ENCODE measurements at regions of chr4 and their contacts with region 1.

Region 1: GRCh38 chr4:112327965-112328733 is 31.0 kb downstream of the ALPK1 start:
- DNase-seq: no peak
- ATAC-seq: peak in 2 of 8 donors; percentile 41 to 46
- H3K4me3 ChIP-seq: no peak overlapping the region
- H3K27ac ChIP-seq: no peak overlapping the region
- H3K4me1 ChIP-seq: peaks cover 0 to 5% (median 0%) of the 10 kb centered on the region in 9 donors
- H3K27me3 ChIP-seq: no peaks in the 10 kb centered on the region
- CTCF ChIP-seq: peak in 8 of 9 donors; percentile 43 to 65 (median 54)

Region 2: DNA sequence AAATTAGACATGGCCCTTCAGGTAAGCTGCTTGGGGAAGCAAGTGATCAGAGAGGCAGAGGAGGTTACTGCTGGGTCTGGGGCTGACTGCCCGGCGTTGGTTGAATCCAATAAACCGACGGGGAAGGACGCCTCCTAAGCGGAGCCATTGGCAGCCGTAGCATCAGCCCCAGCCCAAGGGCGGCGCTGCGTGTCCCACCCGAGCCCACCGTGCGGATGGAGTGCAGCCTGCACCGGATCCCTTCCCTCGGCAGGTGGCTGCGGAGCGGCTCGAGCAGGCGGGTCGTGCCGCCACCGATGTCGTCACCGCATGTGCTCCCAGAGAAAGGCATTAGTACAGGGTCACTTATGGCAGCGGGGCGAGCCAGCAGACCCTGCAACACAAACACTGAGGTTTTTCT is 51.2 kb after region 1 on chr4:
- intact Hi-C with region 1: no loop called
- DNase-seq: peak in 1 of 2 donors; percentile 12
- ATAC-seq: peak in 1 of 8 donors; percentile 16
- H3K4me3 ChIP-seq: peak overlapping the region in 1 of 10 donors; percentile 8
- H3K27ac ChIP-seq: no peak overlapping the region
- H3K4me1 ChIP-seq: peaks cover 0 to 5% (median 0%) of the 10 kb centered on the region in 9 donors
- H3K27me3 ChIP-seq: peaks cover 0 to 3% (median 0%) of the 10 kb centered on the region in 7 donors
- CTCF ChIP-seq: no peak

Region 3: DNA sequence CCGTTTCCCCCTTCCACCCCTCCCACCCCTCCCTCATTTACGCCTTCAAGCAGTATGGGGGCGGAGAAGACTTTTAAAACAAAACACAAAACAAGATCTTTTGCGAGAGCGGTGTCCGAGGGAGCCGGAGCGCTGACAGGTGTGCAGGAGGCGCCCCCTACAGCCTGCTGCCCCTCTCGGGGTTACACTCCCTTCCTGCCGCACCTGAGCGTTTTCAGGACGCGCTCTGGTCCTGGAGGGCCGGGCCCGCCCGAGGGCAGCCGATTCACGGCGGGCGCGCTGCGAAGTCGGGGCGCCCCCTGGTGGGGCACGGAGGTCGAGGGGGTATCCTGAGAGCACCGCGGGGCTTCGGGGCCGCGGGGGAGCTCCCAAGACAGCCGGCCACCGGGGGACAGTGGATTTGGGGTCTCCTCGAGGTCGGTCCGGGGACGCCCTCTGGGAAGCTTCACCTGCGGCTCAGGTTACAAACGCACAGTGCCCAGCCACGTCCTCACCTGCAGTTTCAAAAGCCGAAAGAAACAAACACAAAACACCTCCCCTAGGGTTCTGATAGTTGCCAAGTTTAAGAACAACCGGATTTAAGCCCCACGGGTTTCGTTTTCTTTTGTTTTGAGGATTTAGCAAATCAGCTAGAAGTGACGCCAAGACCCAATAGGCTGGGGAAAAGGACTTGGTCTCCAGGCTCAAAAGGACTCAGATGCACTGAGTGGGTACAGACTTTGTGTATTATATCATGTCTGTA is 195.8 kb after region 1 on chr4:
- intact Hi-C with region 1: loop called (anchors 2 to 10 kb)
- DNase-seq: peak in 1 of 2 donors; percentile 65
- ATAC-seq: peak; percentile 58 to 83 (median 74)
- H3K4me3 ChIP-seq: peak overlapping the region in 7 of 10 donors; percentile 30 to 51 (median 39)
- H3K27ac ChIP-seq: no peak overlapping the region
- H3K4me1 ChIP-seq: peaks cover 0 to 30% (median 17%) of the 10 kb centered on the region in 9 donors
- H3K27me3 ChIP-seq: peaks cover 31 to 94% (median 84%) of the 10 kb centered on the region in 7 donors
- CTCF ChIP-seq: peak; percentile 45 to 84 (median 69)

Region 4: DNA sequence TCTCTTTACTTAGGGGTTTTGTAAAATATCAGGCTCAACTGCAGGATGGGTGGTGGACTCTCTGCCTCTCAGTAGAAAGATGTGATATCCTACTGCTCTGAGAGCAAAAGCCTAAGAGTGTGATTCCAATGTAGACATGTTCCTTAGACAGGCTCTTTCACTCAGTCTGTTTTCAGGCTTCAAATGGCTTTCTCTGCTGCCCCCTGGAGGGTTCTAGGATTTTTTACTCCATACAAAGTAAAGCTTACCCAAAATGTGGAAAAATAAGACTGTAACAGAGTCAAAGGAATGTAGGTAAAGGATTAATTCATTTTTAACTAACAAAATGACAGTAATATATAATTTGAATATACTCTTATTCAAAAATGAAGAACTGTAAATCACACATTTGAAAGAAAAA is 276.4 kb after region 1 on chr4:
- intact Hi-C with region 1: loop called (anchors 1 to 10 kb)
- DNase-seq: peak in 1 of 2 donors; percentile 46
- ATAC-seq: peak in 4 of 8 donors; percentile 33 to 84 (median 80)
- H3K4me3 ChIP-seq: no peak overlapping the region
- H3K27ac ChIP-seq: no peak overlapping the region
- H3K4me1 ChIP-seq: no peaks in the 10 kb centered on the region
- H3K27me3 ChIP-seq: no peaks in the 10 kb centered on the region
- CTCF ChIP-seq: peak; percentile 21 to 74 (median 62)

Region 5: DNA sequence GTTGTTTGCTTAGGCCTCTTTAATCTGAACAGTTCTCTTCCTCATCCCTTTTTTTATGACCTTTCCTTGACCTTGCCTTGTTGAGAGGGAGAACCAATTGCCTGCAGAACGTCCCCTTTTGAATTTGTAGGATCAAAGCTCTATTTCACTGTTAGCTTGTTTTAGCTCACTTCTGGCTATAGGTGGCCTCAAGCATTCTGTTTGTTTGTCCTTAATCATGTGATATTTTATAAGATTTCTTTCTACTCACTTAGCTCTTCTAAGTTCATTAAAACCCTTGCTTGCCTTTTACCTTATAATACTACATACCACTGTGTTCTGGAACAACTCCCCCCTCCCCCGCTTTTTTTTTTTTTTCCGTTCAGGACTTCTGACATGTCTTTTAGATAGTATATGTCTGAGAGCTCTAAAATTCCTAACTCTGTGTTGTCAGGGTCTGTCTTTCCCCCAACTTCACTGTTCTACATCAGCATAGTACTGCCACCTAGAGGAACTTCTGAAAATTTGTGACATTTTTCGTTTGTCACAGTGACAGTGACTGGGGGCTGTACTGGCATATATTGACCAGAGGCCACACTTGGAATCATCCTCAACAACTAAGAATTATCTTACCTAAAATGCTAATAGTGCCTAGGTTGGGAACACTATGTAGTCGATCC is 437.3 kb after region 1 on chr4:
- intact Hi-C with region 1: loop called in 1 of 10 experiments (anchors 10 kb)
- DNase-seq: no peak
- ATAC-seq: peak in 6 of 8 donors; percentile 22 to 66 (median 45)
- H3K4me3 ChIP-seq: no peak overlapping the region
- H3K27ac ChIP-seq: peak overlapping the region in 1 of 10 donors; percentile 10
- H3K4me1 ChIP-seq: peaks cover 0 to 8% (median 0%) of the 10 kb centered on the region in 9 donors
- H3K27me3 ChIP-seq: no peaks in the 10 kb centered on the region
- CTCF ChIP-seq: peak; percentile 14 to 58 (median 47)

Measured in heart right ventricle (tissue), 16 donors.